ENCODE measurements at regions of chr11 and their contacts with region 1.

Region 1: GRCh38 chr11:46278387-46279125 is 1.1 kb downstream of the CREB3L1 start:
- DNase-seq: peak; percentile 62 to 74
- H3K4me3 ChIP-seq: peak overlapping the region; percentile 85
- H3K4me3 Mint-ChIP-seq: peak overlapping the region; percentile 89
- H3K27ac Mint-ChIP-seq: peak overlapping the region; percentile 20
- H3K4me1 ChIP-seq: peaks cover 57% of the 10 kb centered on the region
- H3K4me1 Mint-ChIP-seq: peaks cover 60% of the 10 kb centered on the region
- H3K27me3 ChIP-seq: no peaks in the 10 kb centered on the region
- H3K27me3 Mint-ChIP-seq: no peaks in the 10 kb centered on the region
- CTCF ChIP-seq: peak; percentile 63 to 82

Region 2: GRCh38 chr11:46121724-46122477 is 156.7 kb before region 1 on chr11:
- CTCF ChIA-PET with region 1: no interaction called
- POLR2A ChIA-PET with region 1: interaction called, 10 read pairs
- intact Hi-C with region 1: no loop called
- DNase-seq: peak; percentile 81 to 84
- H3K4me3 ChIP-seq: peak overlapping the region; percentile 85
- H3K4me3 Mint-ChIP-seq: peak overlapping the region; percentile 94
- H3K27ac Mint-ChIP-seq: peak overlapping the region; percentile 53
- H3K4me1 ChIP-seq: peaks cover 7% of the 10 kb centered on the region
- H3K4me1 Mint-ChIP-seq: peaks cover 16% of the 10 kb centered on the region
- H3K27me3 ChIP-seq: no peaks in the 10 kb centered on the region
- H3K27me3 Mint-ChIP-seq: no peaks in the 10 kb centered on the region
- CTCF ChIP-seq: no peak

Region 3: DNA sequence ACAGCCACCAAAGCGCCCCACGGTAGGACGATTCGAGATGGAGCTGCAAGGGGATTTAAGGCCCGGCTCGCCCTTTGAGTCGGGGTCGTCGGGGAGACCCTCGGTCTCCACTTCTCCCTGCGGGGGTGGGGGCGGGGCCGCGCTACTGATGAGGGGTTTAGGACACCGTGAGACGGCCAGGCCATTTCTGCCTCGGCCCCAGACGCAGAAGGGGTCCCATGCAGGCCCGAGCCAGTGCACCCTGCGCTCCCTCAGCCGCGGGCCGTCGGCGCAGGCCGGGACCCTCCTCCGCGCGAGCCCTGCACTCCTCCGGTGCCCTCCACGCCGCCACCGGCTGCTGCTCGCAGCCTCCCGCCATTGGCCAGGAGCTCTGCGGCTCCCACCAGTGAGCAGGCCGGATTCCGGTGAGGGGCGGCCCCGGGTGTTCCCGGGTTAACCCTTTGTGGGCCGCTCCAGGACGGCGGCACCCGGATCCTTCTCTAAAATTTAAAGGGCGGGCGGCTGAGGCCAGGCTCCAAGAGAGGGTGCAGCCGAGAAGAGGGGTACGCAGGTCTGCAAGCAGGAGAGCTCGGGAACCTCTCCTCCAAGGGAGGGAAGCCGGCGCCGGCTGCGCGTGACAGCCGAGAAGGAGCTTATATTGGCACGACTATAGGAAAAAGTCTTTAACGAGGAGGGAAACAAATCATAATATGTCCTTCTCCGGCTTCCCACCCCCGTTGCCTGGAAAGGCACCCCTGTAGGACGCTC is 16.9 kb after region 1 on chr11:
- CTCF ChIA-PET with region 1: interaction called, 12 read pairs
- POLR2A ChIA-PET with region 1: no interaction called
- intact Hi-C with region 1: loop called (anchors 1 kb)
- DNase-seq: no peak
- H3K4me3 ChIP-seq: no peak overlapping the region
- H3K4me3 Mint-ChIP-seq: peak overlapping the region; percentile 44
- H3K27ac Mint-ChIP-seq: peak overlapping the region; percentile 81
- H3K4me1 ChIP-seq: peaks cover 46% of the 10 kb centered on the region
- H3K4me1 Mint-ChIP-seq: peaks cover 19% of the 10 kb centered on the region
- H3K27me3 ChIP-seq: no peaks in the 10 kb centered on the region
- H3K27me3 Mint-ChIP-seq: no peaks in the 10 kb centered on the region
- CTCF ChIP-seq: no peak

Region 4: GRCh38 chr11:46308631-46309419 is 30.3 kb after region 1 on chr11:
- CTCF ChIA-PET with region 1: interaction called, 5 read pairs
- POLR2A ChIA-PET with region 1: no interaction called
- intact Hi-C with region 1: loop called (anchors 1 kb)
- DNase-seq: peak; percentile 86
- H3K4me3 ChIP-seq: no peak overlapping the region
- H3K4me3 Mint-ChIP-seq: no peak overlapping the region
- H3K27ac Mint-ChIP-seq: peak overlapping the region; percentile 17
- H3K4me1 ChIP-seq: peaks cover 16% of the 10 kb centered on the region
- H3K4me1 Mint-ChIP-seq: peaks cover 27% of the 10 kb centered on the region
- H3K27me3 ChIP-seq: no peaks in the 10 kb centered on the region
- H3K27me3 Mint-ChIP-seq: no peaks in the 10 kb centered on the region
- CTCF ChIP-seq: peak; percentile 96 to 97

Region 5: GRCh38 chr11:46410021-46410420 is 131.5 kb after region 1 on chr11:
- CTCF ChIA-PET with region 1: no interaction called
- POLR2A ChIA-PET with region 1: no interaction called
- intact Hi-C with region 1: no loop called
- DNase-seq: no peak
- H3K4me3 ChIP-seq: no peak overlapping the region
- H3K4me3 Mint-ChIP-seq: no peak overlapping the region
- H3K27ac Mint-ChIP-seq: no peak overlapping the region
- H3K4me1 ChIP-seq: 0 out of 2 replicates have a peak, but pooled peaks cover 6% of the 10 kb centered on the region
- H3K4me1 Mint-ChIP-seq: no peaks in the 10 kb centered on the region
- H3K27me3 ChIP-seq: no peaks in the 10 kb centered on the region
- H3K27me3 Mint-ChIP-seq: no peaks in the 10 kb centered on the region
- CTCF ChIP-seq: peak in 1 of 2 experiments; percentile 42